ENCODE measurements at regions of chr3 and their contacts with region 1.

Region 1: GRCh38 chr3:69425261-69425660 is 39.4 kb upstream of the FRMD4B start:
- DNase-seq: peak in 1 of 2 experiments; percentile 34
- H3K4me3 ChIP-seq: no peak overlapping the region
- H3K27ac ChIP-seq: no peak overlapping the region
- H3K4me1 ChIP-seq: no peaks in the 10 kb centered on the region
- H3K27me3 ChIP-seq: no peaks in the 10 kb centered on the region
- CTCF ChIP-seq: peak; percentile 55; the same call in 1 of the 2 replicates

Region 2: DNA sequence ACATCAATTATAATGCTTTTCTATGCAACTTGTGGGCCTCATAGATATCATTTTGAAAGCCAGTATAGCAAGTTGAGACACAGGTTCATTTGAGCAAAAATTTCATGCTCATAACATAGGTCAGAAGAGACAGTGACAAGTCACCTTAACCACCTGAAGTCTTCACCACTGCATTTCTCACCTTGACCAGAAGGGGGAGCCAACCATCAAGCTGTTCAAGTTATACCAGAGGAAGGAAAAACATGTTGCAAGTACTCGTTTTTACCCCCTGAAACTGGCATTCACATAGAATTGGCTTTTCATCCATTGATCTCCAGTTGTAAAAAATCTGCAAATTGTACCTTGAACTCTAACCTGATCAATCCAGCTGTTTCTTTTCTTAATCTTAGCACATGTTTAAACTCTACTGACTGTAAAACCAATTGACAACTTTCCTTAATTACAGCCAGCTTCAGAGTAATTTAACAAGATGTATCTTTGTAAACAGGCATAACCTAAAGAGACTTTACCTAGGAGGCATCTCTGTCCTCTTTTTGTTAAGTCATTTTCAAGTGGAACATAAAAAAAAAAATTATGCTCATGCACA is 304.3 kb before region 1 on chr3:
- CTCF ChIA-PET with region 1: interaction called, 3 read pairs
- POLR2A ChIA-PET with region 1: no interaction called
- intact Hi-C with region 1: loop called (anchors 1 kb)
- DNase-seq: peak; percentile 64 to 77
- H3K4me3 ChIP-seq: no peak overlapping the region
- H3K27ac ChIP-seq: no peak overlapping the region
- H3K4me1 ChIP-seq: peaks cover 18% of the 10 kb centered on the region
- H3K27me3 ChIP-seq: no peaks in the 10 kb centered on the region
- CTCF ChIP-seq: peak; percentile 83

Region 3: DNA sequence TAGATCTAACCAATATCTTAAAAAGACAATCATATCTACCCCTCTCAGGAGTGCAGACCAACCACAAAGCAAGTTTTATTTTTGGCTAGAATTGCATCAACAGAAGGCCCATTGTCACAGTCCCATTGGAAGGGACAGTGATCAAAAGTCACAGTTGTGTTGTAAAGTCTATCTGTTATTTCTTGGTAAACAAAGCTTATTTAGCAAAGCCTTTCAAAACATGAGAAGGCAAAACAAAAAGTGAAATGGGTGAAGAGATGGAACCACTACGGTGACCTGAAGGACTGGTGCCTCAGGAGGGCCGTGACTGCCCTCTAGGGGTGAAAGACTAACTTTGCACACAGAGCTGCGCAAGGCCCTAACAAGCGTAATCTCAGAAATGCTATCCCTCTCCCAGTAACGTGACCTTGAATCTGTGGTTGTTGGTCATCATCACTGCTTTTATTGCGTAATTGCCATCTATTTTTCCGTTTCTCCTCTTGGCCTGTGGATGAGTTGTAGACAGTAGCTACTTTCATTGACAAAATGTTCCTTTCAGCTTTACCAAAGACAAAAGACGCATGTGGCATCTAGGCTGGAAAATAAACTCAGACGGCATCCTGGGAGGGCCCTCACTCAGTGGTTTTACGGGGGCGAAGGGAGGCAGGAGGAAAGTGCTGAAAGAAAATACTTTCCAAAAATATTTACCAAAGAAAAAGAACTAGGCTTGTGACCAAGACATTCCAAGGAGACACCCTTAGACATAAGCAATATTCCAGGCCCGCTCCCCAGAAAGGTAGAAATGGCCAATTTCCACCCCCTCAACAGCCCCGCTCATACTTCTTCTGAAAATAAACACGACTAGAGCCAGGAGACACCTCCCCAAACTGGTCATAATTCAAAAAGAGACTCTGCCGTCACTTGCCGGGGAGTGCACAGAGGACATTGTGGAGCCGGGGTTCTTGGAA is 118.7 kb before region 1 on chr3:
- CTCF ChIA-PET with region 1: interaction called, 3 read pairs
- POLR2A ChIA-PET with region 1: no interaction called
- intact Hi-C with region 1: loop called (anchors 2 kb)
- DNase-seq: peak; percentile 58 to 70
- H3K4me3 ChIP-seq: no peak overlapping the region
- H3K27ac ChIP-seq: peak overlapping the region; percentile 29; the same call in 1 of the 2 replicates
- H3K4me1 ChIP-seq: peaks cover 12% of the 10 kb centered on the region; the same call in 1 of the 2 replicates
- H3K27me3 ChIP-seq: no peaks in the 10 kb centered on the region
- CTCF ChIP-seq: peak; percentile 87

Region 4: GRCh38 chr3:69324362-69325025 is 100.8 kb before region 1 on chr3:
- CTCF ChIA-PET with region 1: no interaction called
- POLR2A ChIA-PET with region 1: no interaction called
- intact Hi-C with region 1: loop called (anchors 5 kb)
- DNase-seq: no peak
- H3K4me3 ChIP-seq: no peak overlapping the region
- H3K27ac ChIP-seq: no peak overlapping the region
- H3K4me1 ChIP-seq: no peaks in the 10 kb centered on the region
- H3K27me3 ChIP-seq: no peaks in the 10 kb centered on the region
- CTCF ChIP-seq: peak; percentile 33; the same call in 1 of the 2 replicates

Region 5: DNA sequence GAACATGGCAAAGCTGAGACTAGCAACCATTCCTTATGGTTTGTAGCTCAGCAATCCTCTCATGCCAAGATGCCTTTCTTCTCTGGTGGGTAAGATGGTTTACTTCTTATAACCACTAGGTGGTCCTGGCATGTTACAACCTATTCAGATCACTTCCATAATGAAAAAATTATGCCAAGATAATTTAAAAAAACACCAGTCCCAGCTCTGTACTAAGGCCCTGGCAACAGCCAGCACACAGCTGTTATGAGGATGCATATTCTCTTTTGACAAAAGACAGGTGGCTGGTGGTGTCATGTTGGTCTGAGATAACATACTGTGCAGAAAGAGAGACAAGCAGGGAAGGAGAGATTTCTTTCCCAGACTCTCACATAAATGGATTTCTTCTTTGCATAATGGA is 26.3 kb after region 1 on chr3:
- CTCF ChIA-PET with region 1: no interaction called
- POLR2A ChIA-PET with region 1: no interaction called
- intact Hi-C with region 1: no loop called
- DNase-seq: no peak
- H3K4me3 ChIP-seq: no peak overlapping the region
- H3K27ac ChIP-seq: no peak overlapping the region
- H3K4me1 ChIP-seq: no peaks in the 10 kb centered on the region
- H3K27me3 ChIP-seq: no peaks in the 10 kb centered on the region
- CTCF ChIP-seq: peak; percentile 33; the same call in 1 of the 2 replicates

Region 6: GRCh38 chr3:69948246-69948862 is 523.1 kb after region 1 on chr3:
- CTCF ChIA-PET with region 1: no interaction called
- POLR2A ChIA-PET with region 1: no interaction called
- intact Hi-C with region 1: loop called (anchors 10 kb)
- DNase-seq: peak; percentile 2 to 40
- H3K4me3 ChIP-seq: no peak overlapping the region
- H3K27ac ChIP-seq: no peak overlapping the region
- H3K4me1 ChIP-seq: no peaks in the 10 kb centered on the region
- H3K27me3 ChIP-seq: no peaks in the 10 kb centered on the region
- CTCF ChIP-seq: peak; percentile 72

Measured in PC-9 (cell line).